Transverse colon (tissue), 4 donors: ENCODE measurements at regions of chr6 and their contacts with region 1.

Region 1: GRCh38 chr6:37207903-37208456 is 38.0 kb downstream of the PIM1 start:
- DNase-seq: peak; percentile 92
- H3K4me3 ChIP-seq: no peak overlapping the region
- H3K27ac ChIP-seq: no peak overlapping the region
- H3K4me1 ChIP-seq: peaks cover 11 to 32% (median 11%) of the 10 kb centered on the region in 4 donors
- H3K27me3 ChIP-seq: no peaks in the 10 kb centered on the region
- CTCF ChIP-seq: peak; percentile 71 to 90 (median 84)
- EP300 ChIP-seq: no peak
- POLR2A ChIP-seq: no peak

Region 2: DNA sequence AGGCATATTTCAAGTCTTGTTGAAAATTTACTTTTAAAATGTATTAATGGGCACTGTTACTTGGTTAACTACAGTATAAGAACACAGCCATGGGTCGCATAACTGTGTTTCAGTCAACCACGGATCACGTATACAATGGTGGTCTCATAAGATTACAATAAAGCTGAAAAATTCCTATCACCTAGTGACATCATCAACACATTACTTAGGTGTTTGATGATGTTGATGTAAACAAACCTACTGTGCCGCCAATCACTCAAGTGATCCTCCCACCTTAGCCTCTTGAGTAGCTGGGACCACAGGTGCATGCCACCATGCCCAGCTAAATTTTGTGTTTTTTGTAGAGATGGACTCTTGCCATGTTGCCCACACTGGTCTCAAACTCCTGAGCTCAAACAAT is 803.8 kb before region 1 on chr6:
- in situ Hi-C with region 1: no loop called
- intact Hi-C with region 1: no loop called
- DNase-seq: no peak
- H3K4me3 ChIP-seq: no peak overlapping the region
- H3K27ac ChIP-seq: no peak overlapping the region
- H3K4me1 ChIP-seq: no peaks in the 10 kb centered on the region
- H3K27me3 ChIP-seq: no peaks in the 10 kb centered on the region
- CTCF ChIP-seq: no peak
- EP300 ChIP-seq: no peak
- POLR2A ChIP-seq: no peak

Region 3: DNA sequence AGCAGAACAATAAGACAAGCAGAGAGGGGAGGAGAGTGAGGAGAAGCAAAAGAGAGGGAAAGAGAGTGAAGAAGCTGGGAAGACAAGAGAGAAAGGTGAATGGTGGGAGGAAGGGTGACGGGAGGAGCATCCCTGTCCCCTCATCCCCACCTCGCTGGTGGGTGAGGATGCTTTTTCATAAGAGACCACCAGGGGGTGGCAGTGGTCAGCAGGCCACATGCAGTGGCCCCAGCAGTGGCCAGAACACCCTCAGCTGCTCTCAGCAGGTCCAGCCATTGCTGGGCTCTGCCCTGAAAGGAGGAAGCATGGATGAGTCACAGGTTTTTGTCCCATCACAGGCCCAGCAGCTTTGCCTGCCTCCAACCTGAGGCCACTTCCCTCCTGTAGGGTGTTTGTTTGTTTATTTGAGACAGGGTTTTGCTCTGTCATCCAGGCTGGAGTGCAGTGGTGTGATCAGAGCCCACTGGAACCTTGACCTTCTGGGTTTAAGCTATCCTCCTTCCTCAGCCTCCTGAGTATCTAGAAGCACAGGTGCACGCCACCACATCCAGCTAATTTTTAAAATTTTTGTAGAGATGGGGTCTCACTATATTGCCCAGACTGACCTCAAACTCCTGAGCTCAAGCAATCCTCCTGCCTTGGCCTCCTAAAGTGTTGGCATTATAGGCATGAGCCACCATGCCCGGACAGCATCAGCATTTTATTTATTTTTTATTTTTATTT is 178.6 kb before region 1 on chr6:
- in situ Hi-C with region 1: loop called in 2 of 4 experiments (anchors 10 kb)
- intact Hi-C with region 1: no loop called
- DNase-seq: peak; percentile 65
- H3K4me3 ChIP-seq: no peak overlapping the region
- H3K27ac ChIP-seq: no peak overlapping the region
- H3K4me1 ChIP-seq: peaks cover 0 to 3% (median 0%) of the 10 kb centered on the region in 4 donors
- H3K27me3 ChIP-seq: no peaks in the 10 kb centered on the region
- CTCF ChIP-seq: peak; percentile 51 to 72 (median 65)
- EP300 ChIP-seq: no peak
- POLR2A ChIP-seq: no peak

Region 4: GRCh38 chr6:37272834-37273566 is 65.0 kb after region 1 on chr6:
- in situ Hi-C with region 1: no loop called
- intact Hi-C with region 1: no loop called
- DNase-seq: no peak
- H3K4me3 ChIP-seq: no peak overlapping the region
- H3K27ac ChIP-seq: no peak overlapping the region
- H3K4me1 ChIP-seq: peaks cover 0 to 11% (median 9%) of the 10 kb centered on the region in 4 donors
- H3K27me3 ChIP-seq: no peaks in the 10 kb centered on the region
- CTCF ChIP-seq: no peak
- EP300 ChIP-seq: no peak
- POLR2A ChIP-seq: no peak